ENCODE measurements at regions of chr11 and their contacts with region 1.

Region 1: DNA sequence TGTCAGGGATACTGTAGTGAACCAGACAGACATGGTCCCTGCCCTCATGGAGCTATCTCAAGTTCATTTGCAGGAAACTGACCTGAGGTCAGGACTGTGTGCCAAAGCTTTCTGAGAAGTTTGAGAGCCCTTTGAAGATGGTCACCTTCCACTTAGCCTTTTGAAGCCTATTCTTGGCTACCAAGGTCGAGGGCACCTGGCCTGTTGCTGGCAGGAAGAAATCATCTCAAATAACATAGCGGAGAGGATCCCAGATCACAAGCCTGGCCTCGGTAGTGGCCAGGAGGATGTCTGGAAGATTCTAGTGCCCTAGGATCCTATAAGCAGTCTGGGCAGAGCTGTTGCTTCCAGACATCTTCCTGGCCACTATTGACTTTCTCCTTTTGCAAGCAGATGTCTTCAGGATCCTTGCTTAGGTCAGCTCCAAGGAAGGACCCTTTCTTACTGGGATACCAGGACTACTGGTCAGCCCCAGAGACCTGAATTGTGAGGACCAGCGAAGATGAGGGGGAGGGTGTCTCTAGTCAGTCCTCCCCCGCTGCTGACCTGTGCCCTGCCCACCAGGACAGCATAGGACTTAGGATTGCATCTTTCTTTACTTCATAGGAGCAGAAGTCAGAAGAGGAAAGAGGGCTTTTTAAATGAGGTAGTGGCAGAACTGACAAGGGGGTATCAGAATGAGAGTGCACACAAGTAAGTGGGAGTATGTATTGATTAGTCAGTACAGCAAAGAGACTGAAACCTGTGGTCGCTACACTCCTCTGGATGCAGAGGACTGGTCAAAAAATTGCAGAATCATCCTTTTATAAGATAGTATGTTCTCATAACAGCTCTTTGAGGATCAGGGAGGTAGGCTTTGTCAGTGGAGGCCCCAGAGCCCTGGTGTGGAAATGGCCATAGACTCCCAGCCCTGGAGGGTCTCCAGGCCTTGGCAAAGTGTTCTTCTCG is 94.8 kb downstream of the TEAD1 start:
- DNase-seq: no peak
- H3K4me3 Mint-ChIP-seq: no peak overlapping the region
- H3K27ac Mint-ChIP-seq: no peak overlapping the region
- H3K4me1 Mint-ChIP-seq: peaks cover 6% of the 10 kb centered on the region
- H3K27me3 Mint-ChIP-seq: peaks cover 9% of the 10 kb centered on the region

Region 2: DNA sequence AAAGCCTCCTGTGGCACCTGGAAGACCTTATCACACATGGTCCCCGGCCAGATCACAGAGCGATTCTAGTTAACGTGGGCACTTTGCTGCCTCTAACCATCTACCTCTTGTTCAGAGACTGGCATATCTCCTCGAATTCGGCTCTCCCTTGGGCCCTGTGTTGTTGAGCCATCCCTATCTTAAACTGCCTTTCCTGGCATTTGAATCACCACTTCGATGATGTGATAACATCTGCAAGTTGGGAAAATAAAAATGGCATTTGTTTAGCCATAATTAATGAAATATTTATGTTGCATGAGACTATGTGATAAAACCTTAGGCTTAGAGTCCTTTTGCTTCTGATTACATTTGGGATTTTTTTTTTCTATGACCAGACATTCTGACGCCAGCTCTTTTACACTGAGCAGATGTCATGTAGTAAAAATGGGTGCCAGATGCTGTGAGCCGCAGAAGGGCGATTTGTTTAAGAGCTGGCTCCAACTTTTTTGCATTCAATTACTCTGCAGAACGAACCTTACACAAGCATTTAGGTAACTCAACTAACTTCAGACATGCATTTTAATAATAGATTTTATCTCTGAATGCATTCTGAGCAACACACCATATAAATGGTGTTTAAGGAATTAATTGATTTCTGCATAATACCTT is 450.1 kb before region 1 on chr11:
- intact Hi-C with region 1: no loop called
- DNase-seq: no peak
- H3K4me3 Mint-ChIP-seq: no peak overlapping the region
- H3K27ac Mint-ChIP-seq: no peak overlapping the region
- H3K4me1 Mint-ChIP-seq: peaks cover 15% of the 10 kb centered on the region
- H3K27me3 Mint-ChIP-seq: no peaks in the 10 kb centered on the region

Region 3: DNA sequence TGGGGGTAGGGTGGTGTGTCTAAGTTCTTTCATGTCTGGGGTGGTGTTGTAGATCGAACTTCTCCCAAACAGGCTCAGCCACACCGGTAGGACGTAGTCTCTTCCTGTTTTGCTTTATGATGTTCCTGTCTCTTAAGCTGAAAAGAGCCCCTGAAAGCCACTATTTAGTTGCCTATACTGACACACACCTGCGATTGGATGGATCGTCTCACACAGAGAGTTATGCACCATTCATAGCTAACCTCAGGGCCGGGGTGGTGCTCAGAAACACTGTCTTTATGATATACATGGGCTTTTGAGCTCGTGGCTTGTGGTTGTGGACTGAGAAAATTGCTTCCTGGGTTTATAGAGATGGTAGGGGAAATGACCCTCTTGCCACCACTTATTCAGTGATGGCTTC is 42.9 kb after region 1 on chr11:
- intact Hi-C with region 1: loop called (anchors 1 kb)
- DNase-seq: no peak
- H3K4me3 Mint-ChIP-seq: no peak overlapping the region
- H3K27ac Mint-ChIP-seq: no peak overlapping the region
- H3K4me1 Mint-ChIP-seq: peaks cover 73% of the 10 kb centered on the region
- H3K27me3 Mint-ChIP-seq: peaks cover 11% of the 10 kb centered on the region

Region 4: GRCh38 chr11:12884751-12885318 is 115.8 kb after region 1 on chr11:
- intact Hi-C with region 1: no loop called
- DNase-seq: no peak
- H3K4me3 Mint-ChIP-seq: no peak overlapping the region
- H3K27ac Mint-ChIP-seq: no peak overlapping the region
- H3K4me1 Mint-ChIP-seq: no peaks in the 10 kb centered on the region
- H3K27me3 Mint-ChIP-seq: peaks cover 8% of the 10 kb centered on the region

Measured in activated T-helper 1 cell treated with anti-CD3 and anti-CD28 coated beads, Interleukin-12 subunit alpha, Interleukin-12 subunit beta, Interleukin-2, Interleukin-4 antibody, amounts not matched to agents 30 ng/mL and 10 ng/mL and 1 ng/mL, durations not matched to agents 14 hours and 24 hours and 36 hours (primary cell).